ENCODE measurements at regions of chr4 and their contacts with region 1.

Region 1: GRCh38 chr4:126230269-126230668 is 915.5 kb downstream of the FAT4 start:
- DNase-seq: peak in 1 of 2 donors; percentile 6
- H3K4me3 ChIP-seq: no peak overlapping the region
- H3K27ac ChIP-seq: no peak overlapping the region
- H3K4me1 ChIP-seq: no peaks in the 10 kb centered on the region
- H3K27me3 ChIP-seq: no peaks in the 10 kb centered on the region
- CTCF ChIP-seq: no peak
- EP300 ChIP-seq: no peak
- POLR2A ChIP-seq: no peak

Region 2: GRCh38 chr4:126051689-126052424 is 178.4 kb before region 1 on chr4:
- intact Hi-C with region 1: loop called (anchors 5 kb)
- DNase-seq: peak in 1 of 2 donors; percentile 81
- H3K4me3 ChIP-seq: no peak overlapping the region
- H3K27ac ChIP-seq: no peak overlapping the region
- H3K4me1 ChIP-seq: peaks cover 0 to 4% (median 0%) of the 10 kb centered on the region in 4 donors
- H3K27me3 ChIP-seq: no peaks in the 10 kb centered on the region
- CTCF ChIP-seq: no peak
- EP300 ChIP-seq: no peak
- POLR2A ChIP-seq: no peak